Ovary (tissue), 10 donors: ENCODE measurements at regions of chr2 and their contacts with region 1.

Region 1: GRCh38 chr2:231604685-231605606 is 12.3 kb downstream of the TEX44 start:
- DNase-seq: peak; percentile 99 to 100 (median 100)
- H3K4me3 ChIP-seq: peak overlapping the region; percentile 77
- H3K27ac ChIP-seq: peak overlapping the region; percentile 97 to 100
- H3K4me1 ChIP-seq: peaks cover 12% of the 10 kb centered on the region
- H3K27me3 ChIP-seq: no peaks in the 10 kb centered on the region
- CTCF ChIP-seq: peak in 1 of 3 donors; percentile 8
- EP300 ChIP-seq: peak; percentile 97
- POLR2A ChIP-seq: peak; percentile 59

Region 2: DNA sequence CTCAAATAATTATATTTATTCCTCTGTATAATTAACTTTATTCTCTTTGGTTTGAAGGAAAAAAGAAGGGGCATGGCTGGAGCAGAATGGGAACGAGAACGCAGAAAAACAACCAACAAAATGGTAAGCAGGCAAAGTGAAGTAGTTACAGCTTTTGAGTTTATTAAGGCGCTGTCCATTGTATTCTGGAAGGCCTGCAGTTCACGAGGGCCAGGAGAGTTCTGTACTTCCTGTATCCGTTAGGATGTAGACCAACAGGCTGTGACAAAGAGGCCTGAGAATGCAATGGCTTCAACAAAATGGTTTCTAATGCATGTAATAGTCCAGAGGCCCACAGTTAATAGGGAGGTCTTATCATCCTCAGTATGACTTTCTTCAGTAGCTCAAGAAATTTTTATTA is 1221.5 kb before region 1 on chr2:
- intact Hi-C with region 1: no loop called
- DNase-seq: no peak
- H3K4me3 ChIP-seq: no peak overlapping the region
- H3K27ac ChIP-seq: no peak overlapping the region
- H3K4me1 ChIP-seq: no peaks in the 10 kb centered on the region
- H3K27me3 ChIP-seq: no peaks in the 10 kb centered on the region
- CTCF ChIP-seq: no peak
- EP300 ChIP-seq: no peak
- POLR2A ChIP-seq: no peak

Region 3: DNA sequence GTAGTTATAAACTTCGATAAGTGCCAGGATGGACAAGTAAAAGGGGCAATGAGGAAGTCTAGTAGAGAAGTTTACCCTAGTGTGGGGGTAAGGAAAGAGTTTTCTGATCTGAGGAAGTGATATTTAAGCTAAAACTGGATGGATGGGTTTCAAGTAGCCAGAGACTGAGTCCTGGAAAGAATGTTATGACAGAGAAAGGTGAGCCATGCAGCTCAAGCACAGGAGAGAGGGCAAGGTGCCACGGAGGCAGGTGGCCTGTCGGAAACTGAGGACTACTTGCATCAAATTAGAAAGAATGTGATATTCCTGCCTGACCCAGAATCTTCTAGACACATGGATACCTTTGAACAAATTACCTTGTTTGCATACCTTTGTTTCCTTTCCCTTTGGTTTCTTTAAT is 101.2 kb before region 1 on chr2:
- intact Hi-C with region 1: no loop called
- DNase-seq: no peak
- H3K4me3 ChIP-seq: no peak overlapping the region
- H3K27ac ChIP-seq: no peak overlapping the region
- H3K4me1 ChIP-seq: no peaks in the 10 kb centered on the region
- H3K27me3 ChIP-seq: no peaks in the 10 kb centered on the region
- CTCF ChIP-seq: no peak
- EP300 ChIP-seq: no peak
- POLR2A ChIP-seq: no peak

Region 4: DNA sequence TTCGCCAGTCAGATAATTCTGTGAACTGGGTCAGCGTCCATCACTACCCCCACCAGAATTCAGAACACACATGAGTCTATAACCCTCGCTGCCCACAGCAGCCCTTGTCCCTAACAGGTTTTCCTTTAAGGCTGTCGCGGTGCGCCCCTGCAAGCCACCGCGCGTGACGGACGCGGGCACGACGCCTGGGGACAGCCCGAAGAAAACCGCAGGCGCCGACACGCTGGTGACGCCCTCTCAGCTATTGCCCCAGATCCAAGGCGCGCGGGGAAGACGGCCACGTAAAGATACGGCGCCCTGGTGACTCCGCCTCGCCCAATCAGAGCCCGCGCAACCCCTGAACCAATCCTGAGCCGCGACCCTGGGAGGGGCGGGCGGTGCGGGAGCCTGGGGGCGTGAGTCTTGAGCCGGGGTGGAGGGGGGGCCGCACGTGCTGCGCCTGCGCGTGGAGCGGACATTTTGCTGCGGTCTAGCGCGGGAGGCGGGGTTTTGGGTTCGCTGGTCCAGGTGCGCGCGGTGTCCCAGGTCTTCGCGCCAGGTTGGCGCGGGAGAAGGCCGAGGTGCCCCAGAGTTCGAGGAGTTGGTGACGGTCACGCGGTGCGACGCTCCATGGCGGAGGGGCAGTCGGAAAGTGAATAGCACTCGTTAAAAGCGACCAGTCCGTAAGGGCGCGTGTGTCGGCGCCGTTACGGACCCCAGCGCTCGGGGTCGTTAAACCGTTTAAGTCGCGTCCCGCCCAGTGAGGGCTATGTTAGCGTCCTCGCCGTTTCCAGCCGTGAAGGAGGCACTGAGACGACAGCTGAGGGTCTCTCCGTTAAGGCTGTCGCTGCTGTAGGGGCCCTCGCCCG is 90.6 kb before region 1 on chr2:
- intact Hi-C with region 1: loop called in 1 of 4 experiments (anchors 10 kb)
- DNase-seq: peak; percentile 97 to 99 (median 98)
- H3K4me3 ChIP-seq: peak overlapping the region; percentile 73
- H3K27ac ChIP-seq: peak overlapping the region; percentile 79 to 80
- H3K4me1 ChIP-seq: peaks cover 2% of the 10 kb centered on the region
- H3K27me3 ChIP-seq: no peaks in the 10 kb centered on the region
- CTCF ChIP-seq: peak in 1 of 3 donors; percentile 18
- EP300 ChIP-seq: peak; percentile 28
- POLR2A ChIP-seq: peak; percentile 91

Region 5: GRCh38 chr2:231522799-231523180 is 82.2 kb before region 1 on chr2:
- intact Hi-C with region 1: loop called in 2 of 4 experiments (anchors 5 to 10 kb)
- DNase-seq: peak in 1 of 5 donors; percentile 36
- H3K4me3 ChIP-seq: no peak overlapping the region
- H3K27ac ChIP-seq: no peak overlapping the region
- H3K4me1 ChIP-seq: peaks cover 3% of the 10 kb centered on the region
- H3K27me3 ChIP-seq: no peaks in the 10 kb centered on the region
- CTCF ChIP-seq: no peak
- EP300 ChIP-seq: no peak
- POLR2A ChIP-seq: no peak

Region 6: DNA sequence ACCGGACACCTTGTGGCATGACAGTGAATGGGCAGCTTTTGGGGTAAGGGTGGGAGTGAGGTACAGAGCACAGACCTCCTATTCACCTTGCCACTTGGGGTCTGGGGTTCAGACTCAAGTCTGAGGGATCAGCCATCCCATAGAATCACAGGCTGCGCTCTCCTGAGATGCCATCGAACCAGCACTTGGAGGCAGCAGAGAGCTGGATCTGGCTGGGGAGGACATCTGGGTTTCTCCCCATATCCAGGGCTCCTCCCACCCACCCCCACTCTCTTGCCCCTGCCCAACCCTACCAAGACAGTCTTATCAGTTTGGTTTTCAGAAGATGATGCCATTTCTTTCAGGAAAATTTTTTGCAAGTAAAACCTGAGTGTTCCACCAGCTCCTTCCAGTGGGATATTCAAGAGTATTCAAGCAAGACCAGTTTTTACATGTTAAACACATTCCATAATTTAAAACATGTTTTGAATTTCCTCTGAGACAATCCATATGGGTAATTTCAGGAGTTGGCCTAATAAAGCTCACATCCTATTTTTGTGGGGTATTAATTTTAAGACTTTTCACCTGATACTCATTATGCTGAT is 41.5 kb before region 1 on chr2:
- intact Hi-C with region 1: loop called in 1 of 4 experiments (anchors 5 kb)
- DNase-seq: peak; percentile 29 to 58 (median 46)
- H3K4me3 ChIP-seq: no peak overlapping the region
- H3K27ac ChIP-seq: no peak overlapping the region
- H3K4me1 ChIP-seq: no peaks in the 10 kb centered on the region
- H3K27me3 ChIP-seq: no peaks in the 10 kb centered on the region
- CTCF ChIP-seq: peak in 1 of 3 donors; percentile 27
- EP300 ChIP-seq: no peak
- POLR2A ChIP-seq: no peak

Region 7: DNA sequence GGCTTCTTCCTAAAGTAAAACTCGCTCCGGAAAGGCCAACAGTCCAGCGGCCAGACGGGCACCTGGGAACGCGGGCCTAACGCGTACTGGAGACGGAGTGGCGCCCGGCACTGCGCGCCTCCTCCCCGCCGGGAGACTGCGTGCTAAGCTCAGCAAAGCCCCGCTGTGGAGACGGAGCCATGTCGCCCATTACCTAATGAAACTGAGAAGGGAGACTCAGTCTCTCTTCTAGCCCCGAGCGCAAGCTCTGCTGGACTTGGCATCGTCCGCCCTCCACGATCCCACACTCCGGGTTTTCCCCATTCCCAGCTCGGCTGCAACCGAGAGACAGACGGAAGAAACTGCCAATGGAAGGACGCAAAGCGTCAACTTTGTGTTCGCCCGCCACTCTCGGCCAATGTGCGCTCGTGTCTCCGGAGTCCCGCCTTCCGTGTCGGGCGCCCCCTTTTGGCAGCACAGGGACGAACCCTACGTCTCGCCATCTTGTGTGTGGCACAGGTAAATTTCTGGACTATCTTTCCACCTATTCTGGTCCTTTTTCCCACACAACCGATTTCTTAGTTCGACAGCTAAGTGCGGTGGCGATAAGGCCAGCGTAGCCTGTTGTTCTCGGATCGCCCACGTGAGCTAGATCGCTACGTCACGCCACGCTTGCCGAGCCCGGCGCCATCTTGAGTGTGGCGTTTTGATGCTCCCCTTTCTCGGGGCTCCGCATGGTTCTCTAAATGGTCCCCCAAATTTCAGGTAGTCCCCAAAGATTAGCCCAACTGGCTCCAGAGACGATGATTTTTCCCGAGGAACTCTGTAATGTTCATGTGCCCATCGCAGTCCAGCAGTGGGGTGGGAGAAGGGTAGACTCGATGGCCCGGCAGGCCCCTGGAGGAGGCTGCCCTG is 102.0 kb after region 1 on chr2:
- intact Hi-C with region 1: loop called in 1 of 4 experiments (anchors 2 kb)
- DNase-seq: peak; percentile 98 to 99 (median 98)
- H3K4me3 ChIP-seq: peak overlapping the region; percentile 81
- H3K27ac ChIP-seq: peak overlapping the region; percentile 100
- H3K4me1 ChIP-seq: peaks cover 12% of the 10 kb centered on the region
- H3K27me3 ChIP-seq: no peaks in the 10 kb centered on the region
- CTCF ChIP-seq: peak; percentile 81 to 95 (median 86)
- EP300 ChIP-seq: peak; percentile 3
- POLR2A ChIP-seq: peak; percentile 95

Region 8: DNA sequence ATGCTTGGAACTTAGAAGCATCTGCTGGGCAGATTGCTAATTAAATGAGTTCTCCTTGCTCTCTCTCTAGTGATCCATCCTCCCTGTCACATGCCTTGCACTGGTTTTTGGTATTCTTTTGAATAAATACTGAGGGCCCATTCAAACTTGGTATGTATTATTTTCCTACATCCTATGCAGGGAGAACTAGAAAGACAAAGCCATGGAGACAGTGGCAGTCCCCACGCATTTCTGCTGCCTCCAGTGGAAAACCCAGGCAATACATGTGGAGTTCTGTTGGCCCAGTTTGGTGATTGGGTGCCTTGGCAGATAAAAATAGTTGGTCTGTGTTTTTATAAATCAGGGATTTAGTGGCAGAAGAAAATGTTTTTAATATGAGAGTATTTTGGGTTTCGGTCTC is 425.3 kb after region 1 on chr2:
- intact Hi-C with region 1: no loop called
- DNase-seq: no peak
- H3K4me3 ChIP-seq: no peak overlapping the region
- H3K27ac ChIP-seq: no peak overlapping the region
- H3K4me1 ChIP-seq: peaks cover 5% of the 10 kb centered on the region
- H3K27me3 ChIP-seq: no peaks in the 10 kb centered on the region
- CTCF ChIP-seq: no peak
- EP300 ChIP-seq: no peak
- POLR2A ChIP-seq: no peak